K562 (cell line): ENCODE measurements at regions of chr7 and their contacts with region 1.

Region 1: GRCh38 chr7:130896898-130897514 is 163.0 kb upstream of the KLF14 start:
- DNase-seq: peak; percentile 87 to 94 (median 88)
- ATAC-seq: peak; percentile 94
- H3K4me3 ChIP-seq: no peak overlapping the region
- H3K27ac ChIP-seq: 0 out of 3 replicates have a peak overlapping the region, but pooled peaks have one; percentile 1
- H3K4me1 ChIP-seq: peaks cover 19 to 20% of the 10 kb centered on the region in 2 experiments
- H3K27me3 ChIP-seq: no peaks in the 10 kb centered on the region
- CTCF ChIP-seq: peak; percentile 96 to 99 (median 96)
- EP300 ChIP-seq: no peak; the same call in 1 of the 2 replicates
- POLR2A ChIP-seq: no peak
- RAD21 ChIP-seq: peak; percentile 96 to 98

Region 2: DNA sequence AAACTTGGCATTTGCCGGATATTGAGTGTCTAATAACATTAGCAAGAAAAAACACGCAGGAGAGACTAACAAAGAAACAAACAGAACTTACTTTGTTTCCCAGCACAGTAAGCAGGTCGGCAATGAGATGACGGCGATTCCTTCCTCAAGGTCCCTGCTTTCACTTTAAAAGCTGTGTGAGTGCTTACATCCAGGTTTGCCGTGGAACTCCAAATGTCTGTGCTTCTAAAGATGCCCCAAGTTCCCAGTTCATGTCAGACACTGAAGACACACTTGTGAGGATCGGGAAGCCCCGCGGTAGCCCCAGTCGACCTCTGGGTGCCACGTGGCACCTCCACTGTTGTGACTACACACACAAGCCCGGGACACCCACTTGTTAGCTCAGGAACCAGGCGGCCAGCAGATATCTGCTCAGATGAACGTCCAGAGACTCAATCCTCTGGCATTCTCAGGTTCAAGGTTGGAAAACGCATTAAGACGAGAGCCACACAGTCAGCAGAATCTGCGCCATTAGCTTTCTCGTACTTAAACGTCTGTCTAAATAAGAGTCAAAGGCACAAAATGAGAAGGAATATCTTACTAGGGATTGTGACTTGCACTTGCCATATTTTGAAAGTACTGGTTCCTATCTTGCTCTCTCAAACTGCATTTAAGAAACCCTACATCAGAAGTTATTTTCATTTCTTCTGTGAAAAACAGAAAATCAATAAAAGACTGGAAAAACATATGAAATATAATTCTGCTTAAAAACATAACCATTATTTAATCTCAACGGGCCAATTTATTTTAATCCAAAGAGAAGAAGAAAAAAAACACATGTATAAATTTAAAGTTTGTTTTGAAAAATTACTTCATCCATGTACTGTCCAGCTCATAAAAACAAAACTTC is 44.6 kb after region 1 on chr7:
- CTCF ChIA-PET with region 1: no interaction called
- POLR2A ChIA-PET with region 1: interaction called, 7 read pairs
- in situ Hi-C with region 1: no loop called
- intact Hi-C with region 1: loop called (anchors 2 kb)
- DNase-seq: peak; percentile 73 to 88 (median 78)
- ATAC-seq: peak; percentile 88
- H3K4me3 ChIP-seq: peak overlapping the region; percentile 45
- H3K27ac ChIP-seq: peak overlapping the region; percentile 93
- H3K4me1 ChIP-seq: peaks cover 0 to 18% of the 10 kb centered on the region in 2 experiments; a peak in 4 of 5 replicates
- H3K27me3 ChIP-seq: no peaks in the 10 kb centered on the region
- CTCF ChIP-seq: no peak
- EP300 ChIP-seq: no peak
- POLR2A ChIP-seq: peak; percentile 82
- RAD21 ChIP-seq: no peak

Region 3: DNA sequence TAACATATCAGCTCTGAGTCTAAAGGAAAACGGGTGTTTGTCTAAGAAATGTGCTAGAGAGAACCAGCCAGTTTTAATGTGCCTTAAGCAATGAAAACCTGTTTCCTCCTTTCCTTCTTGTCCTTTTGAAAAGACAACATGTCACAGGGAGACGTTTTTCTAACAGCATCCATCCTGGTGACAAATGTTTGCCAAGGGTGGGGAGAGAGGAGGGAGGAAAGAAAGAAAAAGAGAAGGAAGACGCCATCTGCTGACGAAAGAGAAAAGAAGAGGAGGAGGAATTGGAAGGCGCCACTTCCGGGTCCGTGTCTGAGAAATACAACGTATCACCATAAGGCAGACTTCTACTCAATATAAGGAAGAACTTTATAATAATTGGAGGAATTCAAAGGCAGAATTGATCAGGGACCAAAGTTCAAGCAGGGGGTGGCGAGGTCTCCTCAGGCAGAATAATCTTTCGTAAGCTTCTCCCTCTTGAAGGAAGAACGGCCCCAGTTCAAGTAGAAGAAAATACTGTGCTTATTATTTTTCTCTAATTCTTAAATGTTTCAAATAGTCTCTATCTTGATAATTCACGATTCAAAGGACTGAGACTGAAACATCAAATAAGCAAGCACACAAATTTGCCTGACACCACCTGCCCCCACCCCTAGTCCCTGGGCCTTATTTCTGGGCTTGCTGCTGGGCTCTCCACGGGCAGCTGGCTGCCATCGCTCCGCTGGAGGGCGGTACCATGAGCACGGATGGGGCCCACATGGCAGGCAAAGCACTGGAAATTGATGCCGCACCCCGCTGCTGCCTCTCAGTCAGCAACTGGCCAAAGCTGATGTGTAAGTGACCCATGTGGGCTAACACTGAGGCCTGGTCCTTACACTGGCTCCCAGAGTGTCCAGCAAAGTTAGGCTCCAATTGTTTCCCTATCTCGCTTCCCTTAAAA is 110.7 kb after region 1 on chr7:
- CTCF ChIA-PET with region 1: interaction called, 38 read pairs
- POLR2A ChIA-PET with region 1: interaction called, 3 read pairs
- in situ Hi-C with region 1: loop called (anchors 5 kb)
- intact Hi-C with region 1: loop called (anchors 1 kb)
- DNase-seq: peak; percentile 76 to 90 (median 80)
- ATAC-seq: peak; percentile 96
- H3K4me3 ChIP-seq: no peak overlapping the region
- H3K27ac ChIP-seq: peak overlapping the region; percentile 50
- H3K4me1 ChIP-seq: peaks cover 12 to 13% of the 10 kb centered on the region in 2 experiments
- H3K27me3 ChIP-seq: no peaks in the 10 kb centered on the region
- CTCF ChIP-seq: peak; percentile 79 to 91 (median 79)
- EP300 ChIP-seq: no peak
- POLR2A ChIP-seq: no peak
- RAD21 ChIP-seq: peak; percentile 87 to 89

Region 4: GRCh38 chr7:131424219-131424822 is 527.3 kb after region 1 on chr7:
- CTCF ChIA-PET with region 1: interaction called, 3 read pairs
- POLR2A ChIA-PET with region 1: no interaction called
- in situ Hi-C with region 1: no loop called
- intact Hi-C with region 1: loop called (anchors 5 kb)
- DNase-seq: peak in 2 of 4 experiments; percentile 22 to 32
- ATAC-seq: peak; percentile 89
- H3K4me3 ChIP-seq: no peak overlapping the region
- H3K27ac ChIP-seq: no peak overlapping the region
- H3K4me1 ChIP-seq: no peaks in the 10 kb centered on the region
- H3K27me3 ChIP-seq: no peaks in the 10 kb centered on the region
- CTCF ChIP-seq: peak; percentile 24 to 77 (median 55); a peak in 5 of 6 replicates
- EP300 ChIP-seq: no peak
- POLR2A ChIP-seq: no peak
- RAD21 ChIP-seq: peak; percentile 58 to 74

Region 5: DNA sequence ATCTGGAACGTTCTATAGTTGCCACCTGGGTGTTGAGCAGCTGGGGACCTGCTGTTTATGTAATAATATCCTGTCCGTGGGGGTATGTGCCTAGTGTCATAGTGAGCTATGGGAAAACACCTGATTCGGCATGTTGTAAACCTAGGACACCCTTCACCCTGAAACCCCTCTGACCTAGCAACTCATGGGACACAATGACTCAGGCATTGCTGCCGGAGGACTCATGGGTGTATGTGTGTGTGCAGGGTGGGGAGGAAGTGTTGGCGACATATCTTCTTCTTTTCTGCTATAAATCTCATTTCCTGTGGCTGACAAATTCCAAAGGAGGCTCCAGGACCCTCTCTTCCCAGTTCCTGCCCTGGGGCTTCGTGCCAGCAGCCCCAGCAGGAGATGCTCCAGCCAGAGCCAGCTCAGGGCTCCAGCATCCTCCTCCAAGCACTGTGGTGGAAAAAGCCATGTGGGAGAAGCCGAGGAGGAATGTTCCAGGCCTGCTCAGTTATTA is 736.4 kb after region 1 on chr7:
- CTCF ChIA-PET with region 1: no interaction called
- POLR2A ChIA-PET with region 1: no interaction called
- in situ Hi-C with region 1: no loop called
- intact Hi-C with region 1: no loop called
- DNase-seq: no peak
- ATAC-seq: peak; percentile 28; the same call in 2 of the 3 replicates
- H3K4me3 ChIP-seq: no peak overlapping the region
- H3K27ac ChIP-seq: no peak overlapping the region
- H3K4me1 ChIP-seq: no peaks in the 10 kb centered on the region; a peak in 1 of 5 replicates
- H3K27me3 ChIP-seq: peaks cover 34 to 71% of the 10 kb centered on the region in 2 experiments
- CTCF ChIP-seq: no peak
- EP300 ChIP-seq: no peak
- POLR2A ChIP-seq: no peak
- RAD21 ChIP-seq: no peak

Region 6: GRCh38 chr7:131654668-131655326 is 757.8 kb after region 1 on chr7:
- CTCF ChIA-PET with region 1: interaction called, 13 read pairs
- POLR2A ChIA-PET with region 1: no interaction called
- in situ Hi-C with region 1: no loop called
- intact Hi-C with region 1: no loop called
- DNase-seq: peak; percentile 85 to 95 (median 90)
- ATAC-seq: peak; percentile 97
- H3K4me3 ChIP-seq: no peak overlapping the region
- H3K27ac ChIP-seq: no peak overlapping the region
- H3K4me1 ChIP-seq: no peaks in the 10 kb centered on the region
- H3K27me3 ChIP-seq: peaks cover 11 to 33% of the 10 kb centered on the region in 2 experiments
- CTCF ChIP-seq: peak; percentile 96 to 98 (median 97)
- EP300 ChIP-seq: no peak
- POLR2A ChIP-seq: no peak
- RAD21 ChIP-seq: peak; percentile 97 to 99